CD8-positive, alpha-beta T cell (primary cell): ENCODE measurements at regions of chr1 and their contacts with region 1.

Region 1: GRCh38 chr1:156524481-156524869 is 23.9 kb upstream of the MEF2D start:
- DNase-seq: peak in 3 of 9 experiments; percentile 49 to 76 (median 59)
- ATAC-seq: peak; percentile 69
- H3K4me3 ChIP-seq: no peak overlapping the region
- H3K4me3 Mint-ChIP-seq: peak overlapping the region; percentile 40
- H3K27ac ChIP-seq: peak overlapping the region in 1 of 2 experiments; percentile 59
- H3K27ac Mint-ChIP-seq: peak overlapping the region; percentile 63
- H3K4me1 ChIP-seq: peaks cover 41% of the 10 kb centered on the region
- H3K4me1 Mint-ChIP-seq: peaks cover 44% of the 10 kb centered on the region
- H3K27me3 ChIP-seq: no peaks in the 10 kb centered on the region
- H3K27me3 Mint-ChIP-seq: no peaks in the 10 kb centered on the region
- CTCF ChIP-seq: no peak

Region 2: GRCh38 chr1:156489166-156489934 is 35.1 kb before region 1 on chr1:
- CTCF ChIA-PET with region 1: no interaction called
- POLR2A ChIA-PET with region 1: no interaction called
- intact Hi-C with region 1: loop called (anchors 5 kb)
- DNase-seq: peak in 7 of 9 experiments; percentile 34 to 79 (median 64)
- ATAC-seq: peak; percentile 73
- H3K4me3 ChIP-seq: peak overlapping the region; percentile 24 to 29
- H3K4me3 Mint-ChIP-seq: peak overlapping the region; percentile 73
- H3K27ac ChIP-seq: peak overlapping the region; percentile 44 to 88
- H3K27ac Mint-ChIP-seq: peak overlapping the region; percentile 93
- H3K4me1 ChIP-seq: peaks cover 85% of the 10 kb centered on the region
- H3K4me1 Mint-ChIP-seq: peaks cover 94% of the 10 kb centered on the region
- H3K27me3 ChIP-seq: no peaks in the 10 kb centered on the region
- H3K27me3 Mint-ChIP-seq: no peaks in the 10 kb centered on the region
- CTCF ChIP-seq: no peak